ENCODE measurements at regions of chr14 and their contacts with region 1.

Region 1: GRCh38 chr14:105045710-105046326 is 19.4 kb downstream of the GPR132 start:
- DNase-seq: peak; percentile 95
- H3K4me3 Mint-ChIP-seq: no peak overlapping the region
- H3K27ac Mint-ChIP-seq: no peak overlapping the region
- H3K4me1 Mint-ChIP-seq: peaks cover 5% of the 10 kb centered on the region
- H3K27me3 Mint-ChIP-seq: no peaks in the 10 kb centered on the region

Region 2: GRCh38 chr14:103828315-103828967 is 1217.4 kb before region 1 on chr14:
- CTCF ChIA-PET with region 1: no interaction called
- intact Hi-C with region 1: no loop called
- DNase-seq: peak; percentile 59
- H3K4me3 Mint-ChIP-seq: no peak overlapping the region
- H3K27ac Mint-ChIP-seq: no peak overlapping the region
- H3K4me1 Mint-ChIP-seq: peaks cover 17% of the 10 kb centered on the region
- H3K27me3 Mint-ChIP-seq: no peaks in the 10 kb centered on the region

Region 3: GRCh38 chr14:104932676-104933631 is 112.9 kb before region 1 on chr14:
- CTCF ChIA-PET with region 1: interaction called, 6 read pairs
- intact Hi-C with region 1: loop called (anchors 1 kb)
- DNase-seq: peak; percentile 91
- H3K4me3 Mint-ChIP-seq: peak overlapping the region; percentile 56
- H3K27ac Mint-ChIP-seq: no peak overlapping the region
- H3K4me1 Mint-ChIP-seq: peaks cover 2% of the 10 kb centered on the region
- H3K27me3 Mint-ChIP-seq: peaks cover 11% of the 10 kb centered on the region

Region 4: DNA sequence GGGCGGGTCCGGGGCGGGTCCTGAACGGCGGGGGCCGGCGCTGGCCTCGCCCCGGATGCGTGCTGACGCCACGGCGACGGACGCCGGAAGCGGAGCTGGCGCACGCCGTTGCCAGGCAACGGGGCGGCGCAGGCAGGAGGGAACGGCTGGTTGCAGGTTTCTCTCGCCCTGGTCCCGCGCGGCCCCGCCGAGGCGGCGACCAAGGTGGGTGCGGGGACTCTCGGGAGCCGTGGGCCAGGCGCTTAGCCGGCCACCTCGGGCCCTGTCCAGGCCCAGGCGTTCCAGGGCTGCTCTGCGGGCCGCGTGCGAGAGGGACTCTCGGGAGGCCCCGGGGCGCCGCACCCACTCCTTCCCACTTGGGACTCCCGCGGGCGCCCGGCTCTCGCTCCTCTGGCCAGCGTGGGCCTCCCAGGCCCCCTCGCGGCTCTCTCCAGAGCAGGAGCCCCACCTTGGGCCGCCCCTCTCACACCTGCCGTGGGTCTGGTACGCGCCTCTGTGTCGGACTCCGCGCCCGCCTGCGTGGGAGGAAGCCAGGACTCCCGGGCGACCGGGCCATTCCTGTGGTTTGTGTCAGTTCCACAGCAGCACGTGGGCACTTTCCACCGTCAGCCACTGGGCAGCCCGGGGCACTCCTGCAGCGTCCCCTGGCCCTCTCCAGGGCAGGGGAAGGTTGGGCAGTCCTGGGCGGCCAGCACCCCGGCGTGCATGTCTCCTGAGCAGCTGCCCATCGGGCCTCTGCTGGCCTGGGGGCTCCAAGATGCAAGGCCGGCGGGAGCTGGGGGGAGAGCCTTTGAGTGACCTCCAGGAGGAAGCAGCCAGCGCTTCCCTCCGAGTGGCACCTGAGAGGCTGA is 59.9 kb before region 1 on chr14 and contains the start of gene CLBA1:
- CTCF ChIA-PET with region 1: interaction called, 29 read pairs
- intact Hi-C with region 1: no loop called
- DNase-seq: peak; percentile 81
- H3K4me3 Mint-ChIP-seq: peak within 1 kb of the TSS; percentile 65
- H3K27ac Mint-ChIP-seq: peak within 1 kb of the TSS; percentile 44
- H3K4me1 Mint-ChIP-seq: peaks cover 5% of the 10 kb centered on the region
- H3K27me3 Mint-ChIP-seq: no peaks in the 10 kb centered on the region
- total RNA-seq, gene CLBA1: 0.40 to 0.43 TPM

Region 5: DNA sequence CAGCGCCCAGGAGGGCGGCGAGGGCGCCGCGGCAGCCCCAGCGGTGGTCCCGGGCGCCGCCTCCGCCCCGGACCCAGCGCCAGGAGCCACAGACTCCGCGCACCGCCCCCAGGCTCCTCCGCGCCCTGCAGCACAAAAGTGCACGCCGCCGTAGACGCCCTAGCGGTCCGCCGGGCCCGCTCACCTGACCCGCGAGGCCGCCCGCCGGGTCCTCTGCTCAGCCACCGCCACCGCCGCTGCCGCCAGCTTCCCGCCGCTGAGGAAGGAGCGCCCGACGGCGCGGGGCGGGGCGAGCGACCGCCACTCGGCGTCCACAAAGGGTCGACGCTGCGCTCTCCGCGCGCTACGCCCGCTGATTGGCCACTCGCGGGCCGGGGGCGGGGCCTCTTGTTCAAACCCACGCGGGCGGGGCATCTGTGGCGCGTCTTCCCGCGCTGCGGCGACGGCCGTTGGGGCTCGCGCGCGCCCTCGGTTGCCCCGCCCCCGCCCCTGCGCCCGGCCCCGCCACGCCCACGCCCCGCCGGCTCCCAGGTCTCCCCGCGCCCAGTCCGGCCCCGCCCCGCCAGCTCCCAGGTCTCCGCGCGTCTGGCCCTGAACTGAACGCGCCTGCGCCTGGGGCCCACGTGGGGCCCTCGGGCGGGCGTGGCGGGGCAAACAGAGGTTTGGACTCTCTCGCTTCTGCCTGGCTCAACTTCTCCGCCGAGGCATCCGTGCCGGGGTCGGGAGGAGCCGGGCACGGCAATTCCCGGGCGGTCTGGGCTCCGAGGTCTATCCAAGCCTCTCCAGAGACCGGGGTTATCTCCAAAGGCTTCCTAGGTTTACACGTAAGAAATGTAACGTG is 24.8 kb before region 1 on chr14 and contains the start of gene CDCA4:
- CTCF ChIA-PET with region 1: interaction called, 21 read pairs
- intact Hi-C with region 1: loop called (anchors 1 kb)
- DNase-seq: peak; percentile 98
- H3K4me3 Mint-ChIP-seq: peak within 1 kb of the TSS; percentile 98
- H3K27ac Mint-ChIP-seq: peak within 1 kb of the TSS; percentile 87
- H3K4me1 Mint-ChIP-seq: peaks cover 71% of the 10 kb centered on the region
- H3K27me3 Mint-ChIP-seq: no peaks in the 10 kb centered on the region
- total RNA-seq, gene CDCA4: 59.6 to 60.4 TPM

Region 6: GRCh38 chr14:105059035-105059924 is 13.5 kb after region 1 on chr14:
- CTCF ChIA-PET with region 1: interaction called, 9 read pairs
- intact Hi-C with region 1: loop called (anchors 1 kb)
- DNase-seq: peak; percentile 87
- H3K4me3 Mint-ChIP-seq: peak overlapping the region; percentile 28
- H3K27ac Mint-ChIP-seq: peak overlapping the region; percentile 94
- H3K4me1 Mint-ChIP-seq: peaks cover 57% of the 10 kb centered on the region
- H3K27me3 Mint-ChIP-seq: no peaks in the 10 kb centered on the region